CD4-positive, alpha-beta T cell (primary cell): ENCODE measurements at regions of chr6 and their contacts with region 1.

Region 1: GRCh38 chr6:13328076-13328874 is at the start of gene TBC1D7:
- DNase-seq: peak; percentile 85 to 97 (median 92)
- ATAC-seq: peak; percentile 87
- H3K4me3 ChIP-seq: peak within 1 kb of the TSS; percentile 91
- H3K4me3 Mint-ChIP-seq: peak within 1 kb of the TSS; percentile 97
- H3K27ac ChIP-seq: peak within 1 kb of the TSS; percentile 88 to 95
- H3K27ac Mint-ChIP-seq: peak within 1 kb of the TSS; percentile 99
- H3K4me1 ChIP-seq: peaks cover 13% of the 10 kb centered on the region
- H3K4me1 Mint-ChIP-seq: peaks cover 38% of the 10 kb centered on the region
- H3K27me3 ChIP-seq: no peaks in the 10 kb centered on the region
- H3K27me3 Mint-ChIP-seq: no peaks in the 10 kb centered on the region
- CTCF ChIP-seq: no peak
- total RNA-seq, gene TBC1D7: 10.2 to 12.3 TPM

Region 2: GRCh38 chr6:11542863-11543262 is 1785.4 kb before region 1 on chr6:
- CTCF ChIA-PET with region 1: no interaction called
- POLR2A ChIA-PET with region 1: no interaction called
- intact Hi-C with region 1: loop called in 1 of 2 experiments (anchors 10 kb)
- DNase-seq: no peak
- ATAC-seq: no peak
- H3K4me3 ChIP-seq: no peak overlapping the region
- H3K4me3 Mint-ChIP-seq: no peak overlapping the region
- H3K27ac ChIP-seq: no peak overlapping the region
- H3K27ac Mint-ChIP-seq: no peak overlapping the region
- H3K4me1 ChIP-seq: peaks cover 7% of the 10 kb centered on the region
- H3K4me1 Mint-ChIP-seq: peaks cover 21% of the 10 kb centered on the region
- H3K27me3 ChIP-seq: no peaks in the 10 kb centered on the region
- H3K27me3 Mint-ChIP-seq: no peaks in the 10 kb centered on the region
- CTCF ChIP-seq: no peak

Region 3: DNA sequence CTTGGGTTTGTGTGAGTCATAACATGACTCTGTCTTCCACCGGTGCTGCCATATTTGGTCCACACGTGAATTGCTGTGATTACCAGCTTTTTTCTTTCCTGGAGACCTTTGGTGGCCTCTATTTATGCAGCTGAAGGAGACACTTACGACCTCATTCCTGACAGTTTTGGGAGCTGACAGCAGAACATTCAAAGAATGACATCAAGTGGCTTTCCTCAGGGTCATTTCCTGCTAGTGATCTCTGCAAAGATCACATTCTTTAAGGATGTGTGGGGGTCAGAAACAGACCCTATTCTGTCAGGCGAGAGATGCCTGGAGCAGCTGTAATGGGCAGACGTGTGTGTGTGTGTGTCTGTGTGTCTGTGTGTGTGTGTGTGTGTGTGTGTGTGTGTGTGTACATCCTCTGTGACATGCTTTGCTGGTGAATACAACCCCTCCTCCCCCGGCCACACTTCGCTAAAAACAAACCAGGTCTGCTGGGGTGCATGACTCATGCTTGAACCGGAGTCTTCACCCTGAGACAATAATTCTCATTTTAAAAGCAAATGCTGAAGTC is 1675.2 kb before region 1 on chr6:
- CTCF ChIA-PET with region 1: no interaction called
- POLR2A ChIA-PET with region 1: no interaction called
- intact Hi-C with region 1: loop called in 1 of 2 experiments (anchors 5 kb)
- DNase-seq: peak in 12 of 14 experiments; percentile 4 to 68 (median 35)
- ATAC-seq: peak; percentile 57
- H3K4me3 ChIP-seq: no peak overlapping the region
- H3K4me3 Mint-ChIP-seq: no peak overlapping the region
- H3K27ac ChIP-seq: no peak overlapping the region
- H3K27ac Mint-ChIP-seq: no peak overlapping the region
- H3K4me1 ChIP-seq: peaks cover 2% of the 10 kb centered on the region
- H3K4me1 Mint-ChIP-seq: no peaks in the 10 kb centered on the region
- H3K27me3 ChIP-seq: no peaks in the 10 kb centered on the region
- H3K27me3 Mint-ChIP-seq: no peaks in the 10 kb centered on the region
- CTCF ChIP-seq: no peak

Region 4: DNA sequence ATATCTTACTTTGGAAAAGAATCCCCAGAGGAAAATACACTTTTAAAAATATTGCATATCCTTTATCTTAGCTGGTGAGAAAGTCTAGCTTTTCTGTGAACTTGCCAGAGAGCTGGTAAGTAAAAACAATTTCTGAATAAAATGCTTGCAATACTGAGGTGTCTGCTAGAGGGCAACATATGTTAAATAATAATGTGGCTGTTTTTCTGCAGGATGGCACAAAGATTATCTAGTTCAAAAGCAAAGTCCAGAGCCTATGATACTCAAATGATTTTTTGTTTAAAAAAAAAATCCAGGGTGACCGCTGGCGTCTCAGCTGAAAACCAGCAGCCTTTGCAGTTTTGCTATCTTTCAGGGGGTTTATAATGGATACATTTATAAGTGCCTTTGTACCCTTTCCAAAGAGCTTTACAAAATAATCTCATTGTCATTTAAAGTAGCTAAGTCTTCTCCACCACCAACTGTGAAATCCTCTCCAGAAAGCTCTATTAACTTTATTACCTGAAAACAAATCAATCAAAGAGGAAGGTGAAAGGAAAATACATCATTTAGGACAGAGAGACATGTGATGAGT is 416.8 kb before region 1 on chr6:
- CTCF ChIA-PET with region 1: no interaction called
- POLR2A ChIA-PET with region 1: interaction called, 4 read pairs
- intact Hi-C with region 1: loop called (anchors 2 kb)
- DNase-seq: peak in 3 of 14 experiments; percentile 6 to 18 (median 11)
- ATAC-seq: no peak
- H3K4me3 ChIP-seq: no peak overlapping the region
- H3K4me3 Mint-ChIP-seq: no peak overlapping the region
- H3K27ac ChIP-seq: no peak overlapping the region
- H3K27ac Mint-ChIP-seq: no peak overlapping the region
- H3K4me1 ChIP-seq: no peaks in the 10 kb centered on the region
- H3K4me1 Mint-ChIP-seq: no peaks in the 10 kb centered on the region
- H3K27me3 ChIP-seq: peaks cover 0 to 2% of the 10 kb centered on the region in 2 experiments
- H3K27me3 Mint-ChIP-seq: no peaks in the 10 kb centered on the region
- CTCF ChIP-seq: peak; percentile 17

Region 5: GRCh38 chr6:13099771-13100170 is 228.5 kb before region 1 on chr6:
- CTCF ChIA-PET with region 1: no interaction called
- POLR2A ChIA-PET with region 1: no interaction called
- intact Hi-C with region 1: no loop called
- DNase-seq: no peak
- ATAC-seq: no peak
- H3K4me3 ChIP-seq: no peak overlapping the region
- H3K4me3 Mint-ChIP-seq: no peak overlapping the region
- H3K27ac ChIP-seq: no peak overlapping the region
- H3K27ac Mint-ChIP-seq: no peak overlapping the region
- H3K4me1 ChIP-seq: no peaks in the 10 kb centered on the region
- H3K4me1 Mint-ChIP-seq: no peaks in the 10 kb centered on the region
- H3K27me3 ChIP-seq: peaks cover 2 to 4% of the 10 kb centered on the region in 2 experiments
- H3K27me3 Mint-ChIP-seq: no peaks in the 10 kb centered on the region
- CTCF ChIP-seq: peak; percentile 19

Region 6: GRCh38 chr6:13194852-13195251 is 133.4 kb before region 1 on chr6:
- CTCF ChIA-PET with region 1: no interaction called
- POLR2A ChIA-PET with region 1: no interaction called
- intact Hi-C with region 1: loop called in 1 of 2 experiments (anchors 5 kb)
- DNase-seq: peak in 4 of 14 experiments; percentile 4 to 48 (median 28)
- ATAC-seq: no peak
- H3K4me3 ChIP-seq: no peak overlapping the region
- H3K4me3 Mint-ChIP-seq: no peak overlapping the region
- H3K27ac ChIP-seq: no peak overlapping the region
- H3K27ac Mint-ChIP-seq: no peak overlapping the region
- H3K4me1 ChIP-seq: no peaks in the 10 kb centered on the region
- H3K4me1 Mint-ChIP-seq: no peaks in the 10 kb centered on the region
- H3K27me3 ChIP-seq: no peaks in the 10 kb centered on the region
- H3K27me3 Mint-ChIP-seq: peaks cover 5% of the 10 kb centered on the region
- CTCF ChIP-seq: peak; percentile 11

Region 7: DNA sequence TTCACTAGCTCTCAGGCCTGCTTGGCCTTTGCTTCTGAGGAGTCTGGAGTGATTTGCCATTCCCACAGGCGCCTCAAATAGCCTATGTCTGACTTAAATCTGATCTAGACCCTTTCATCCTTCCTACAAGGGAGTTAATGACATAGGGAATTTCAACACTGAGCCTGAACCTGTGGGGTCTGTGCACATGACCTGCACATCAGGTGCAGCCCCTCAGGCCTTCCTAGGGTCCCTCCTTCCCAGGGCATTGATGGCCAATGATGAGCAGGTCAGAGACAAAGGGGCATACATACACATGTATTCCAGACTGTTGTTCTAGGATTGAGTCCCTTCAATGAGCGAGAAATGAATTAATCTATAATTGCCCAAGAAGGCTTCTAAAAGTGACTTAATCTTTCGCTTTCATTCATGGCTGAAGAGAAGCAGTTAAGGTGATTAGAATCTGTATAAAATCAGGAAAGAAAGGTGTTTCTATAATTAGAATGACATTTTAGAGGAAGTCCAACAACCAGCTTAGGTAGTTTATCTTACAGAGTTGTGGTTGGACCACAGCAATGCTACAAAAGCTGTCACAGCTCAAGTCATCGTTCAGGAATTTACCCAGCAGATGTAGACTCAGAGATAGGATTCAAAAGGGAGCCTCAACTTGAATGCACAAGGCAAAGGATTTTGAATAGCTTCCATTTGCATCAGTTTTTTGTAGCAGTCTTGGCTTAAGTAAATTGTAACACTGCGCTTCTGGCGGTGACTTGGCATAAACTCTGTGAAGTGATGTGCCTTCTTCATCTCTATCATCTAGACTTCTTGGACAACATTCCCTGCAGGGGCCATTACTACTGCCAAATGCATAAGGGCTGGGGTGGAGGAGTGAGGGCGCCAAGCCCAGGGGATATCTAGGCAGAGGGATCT is 27.0 kb after region 1 on chr6:
- CTCF ChIA-PET with region 1: no interaction called
- POLR2A ChIA-PET with region 1: interaction called, 14 read pairs
- intact Hi-C with region 1: no loop called
- DNase-seq: peak in 4 of 14 experiments; percentile 20 to 73 (median 58)
- ATAC-seq: peak; percentile 69
- H3K4me3 ChIP-seq: peak overlapping the region; percentile 43
- H3K4me3 Mint-ChIP-seq: peak overlapping the region; percentile 81
- H3K27ac ChIP-seq: peak overlapping the region; percentile 60 to 65
- H3K27ac Mint-ChIP-seq: peak overlapping the region; percentile 89
- H3K4me1 ChIP-seq: peaks cover 30% of the 10 kb centered on the region
- H3K4me1 Mint-ChIP-seq: peaks cover 41% of the 10 kb centered on the region
- H3K27me3 ChIP-seq: no peaks in the 10 kb centered on the region
- H3K27me3 Mint-ChIP-seq: no peaks in the 10 kb centered on the region
- CTCF ChIP-seq: no peak

Region 8: GRCh38 chr6:13395272-13396237 is 67.3 kb after region 1 on chr6:
- CTCF ChIA-PET with region 1: no interaction called
- POLR2A ChIA-PET with region 1: no interaction called
- intact Hi-C with region 1: no loop called
- DNase-seq: peak in 2 of 14 experiments; percentile 32 to 39
- ATAC-seq: no peak
- H3K4me3 ChIP-seq: no peak overlapping the region
- H3K4me3 Mint-ChIP-seq: no peak overlapping the region
- H3K27ac ChIP-seq: no peak overlapping the region
- H3K27ac Mint-ChIP-seq: no peak overlapping the region
- H3K4me1 ChIP-seq: peaks cover 5% of the 10 kb centered on the region
- H3K4me1 Mint-ChIP-seq: peaks cover 4% of the 10 kb centered on the region
- H3K27me3 ChIP-seq: no peaks in the 10 kb centered on the region
- H3K27me3 Mint-ChIP-seq: no peaks in the 10 kb centered on the region
- CTCF ChIP-seq: no peak

Region 9: DNA sequence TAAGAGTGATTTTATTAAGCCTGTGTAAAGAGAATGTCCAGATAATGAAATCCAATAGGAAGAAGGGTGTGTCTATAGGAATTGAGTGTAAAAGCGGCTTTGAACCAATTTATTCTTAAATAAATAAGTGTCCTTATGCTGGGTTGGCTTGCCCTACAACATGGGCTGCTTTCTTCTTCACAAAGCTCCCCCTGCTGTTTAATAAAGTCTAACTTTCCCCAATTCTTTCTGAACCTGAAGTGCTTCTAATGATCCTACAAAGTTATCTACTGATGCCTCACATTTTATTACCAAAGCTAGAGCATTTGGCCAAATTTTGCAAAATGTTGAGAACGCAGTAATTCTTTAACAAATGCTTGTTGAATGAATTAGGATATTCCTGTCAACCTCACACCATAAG is 209.8 kb after region 1 on chr6:
- CTCF ChIA-PET with region 1: no interaction called
- POLR2A ChIA-PET with region 1: no interaction called
- intact Hi-C with region 1: no loop called
- DNase-seq: peak in 4 of 14 experiments; percentile 10 to 55 (median 49)
- ATAC-seq: no peak
- H3K4me3 ChIP-seq: no peak overlapping the region
- H3K4me3 Mint-ChIP-seq: no peak overlapping the region
- H3K27ac ChIP-seq: no peak overlapping the region
- H3K27ac Mint-ChIP-seq: no peak overlapping the region
- H3K4me1 ChIP-seq: no peaks in the 10 kb centered on the region
- H3K4me1 Mint-ChIP-seq: no peaks in the 10 kb centered on the region
- H3K27me3 ChIP-seq: no peaks in the 10 kb centered on the region
- H3K27me3 Mint-ChIP-seq: no peaks in the 10 kb centered on the region
- CTCF ChIP-seq: peak; percentile 60

Region 10: GRCh38 chr6:13814176-13814937 is 486.1 kb after region 1 on chr6 and contains the start of gene MCUR1:
- CTCF ChIA-PET with region 1: no interaction called
- POLR2A ChIA-PET with region 1: interaction called, 10 read pairs
- intact Hi-C with region 1: loop called in 1 of 2 experiments (anchors 1 kb)
- DNase-seq: peak; percentile 54 to 94 (median 73)
- ATAC-seq: peak; percentile 83
- H3K4me3 ChIP-seq: peak within 1 kb of the TSS; percentile 70
- H3K4me3 Mint-ChIP-seq: peak within 1 kb of the TSS; percentile 90
- H3K27ac ChIP-seq: peak within 1 kb of the TSS; percentile 72 to 80
- H3K27ac Mint-ChIP-seq: peak within 1 kb of the TSS; percentile 86
- H3K4me1 ChIP-seq: peaks cover 18% of the 10 kb centered on the region
- H3K4me1 Mint-ChIP-seq: peaks cover 37% of the 10 kb centered on the region
- H3K27me3 ChIP-seq: no peaks in the 10 kb centered on the region
- H3K27me3 Mint-ChIP-seq: no peaks in the 10 kb centered on the region
- CTCF ChIP-seq: peak; percentile 20
- total RNA-seq, gene MCUR1: 3.2 to 4.5 TPM

Region 11: GRCh38 chr6:14690120-14691056 is 1362.1 kb after region 1 on chr6:
- CTCF ChIA-PET with region 1: no interaction called
- POLR2A ChIA-PET with region 1: no interaction called
- intact Hi-C with region 1: no loop called
- DNase-seq: no peak
- ATAC-seq: no peak
- H3K4me3 ChIP-seq: no peak overlapping the region
- H3K4me3 Mint-ChIP-seq: no peak overlapping the region
- H3K27ac ChIP-seq: no peak overlapping the region
- H3K27ac Mint-ChIP-seq: no peak overlapping the region
- H3K4me1 ChIP-seq: no peaks in the 10 kb centered on the region
- H3K4me1 Mint-ChIP-seq: no peaks in the 10 kb centered on the region
- H3K27me3 ChIP-seq: no peaks in the 10 kb centered on the region
- H3K27me3 Mint-ChIP-seq: no peaks in the 10 kb centered on the region
- CTCF ChIP-seq: no peak